GM10248 (cell line): ENCODE measurements at regions of chr3 and their contacts with region 1.

Region 1: GRCh38 chr3:99499235-99500158 is 138.9 kb upstream of the COL8A1 start:
- DNase-seq: peak; percentile 23
- CTCF ChIP-seq: peak; percentile 66

Region 2: DNA sequence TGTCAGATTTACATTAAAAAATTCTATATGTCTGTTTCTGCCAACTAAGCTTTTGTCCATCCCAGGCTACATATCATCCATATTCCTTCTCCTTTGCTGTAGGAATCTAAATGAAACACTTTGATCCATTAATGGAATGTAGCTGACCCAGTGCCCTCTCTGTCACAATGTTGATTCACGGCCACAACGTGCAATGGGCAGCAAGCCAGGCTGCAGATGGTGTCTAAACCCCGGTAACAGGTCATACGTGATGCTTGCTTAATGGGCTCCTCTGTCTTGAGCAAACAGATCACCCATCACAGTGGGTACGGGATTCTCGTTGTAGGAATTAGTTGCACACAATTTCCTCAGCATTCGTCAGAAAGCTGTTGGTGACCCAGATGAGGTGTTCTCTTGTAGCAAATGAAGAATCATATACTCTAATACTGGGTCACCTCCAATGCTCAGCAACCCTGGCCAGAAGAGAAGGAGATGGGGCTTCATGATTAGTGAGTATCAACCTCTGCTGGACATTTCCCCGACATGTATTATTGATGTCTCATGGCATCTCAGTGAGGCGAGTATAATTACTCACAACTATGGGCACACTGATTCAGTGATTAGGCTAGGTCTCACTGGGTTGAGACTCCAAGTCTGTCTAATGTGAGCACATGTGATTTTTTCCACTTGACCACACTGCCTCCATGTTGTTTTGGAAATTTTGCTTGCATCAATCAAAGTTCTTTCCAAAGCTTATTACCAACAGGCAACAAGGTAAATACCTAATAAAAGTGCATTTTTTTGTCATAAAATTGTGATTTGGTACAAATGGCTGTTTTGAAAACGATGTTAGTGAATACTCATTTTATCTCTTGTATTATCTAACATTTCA is 585.1 kb before region 1 on chr3:
- CTCF ChIA-PET with region 1: no interaction called
- POLR2A ChIA-PET with region 1: no interaction called
- DNase-seq: no peak
- CTCF ChIP-seq: no peak

Region 3: GRCh38 chr3:99468918-99469317 is 30.6 kb before region 1 on chr3:
- CTCF ChIA-PET with region 1: interaction called, 11 read pairs
- POLR2A ChIA-PET with region 1: no interaction called
- DNase-seq: no peak
- CTCF ChIP-seq: no peak

Region 4: GRCh38 chr3:99479768-99480167 is 19.7 kb before region 1 on chr3:
- CTCF ChIA-PET with region 1: interaction called, 61 read pairs
- POLR2A ChIA-PET with region 1: no interaction called
- DNase-seq: no peak
- CTCF ChIP-seq: no peak

Region 5: DNA sequence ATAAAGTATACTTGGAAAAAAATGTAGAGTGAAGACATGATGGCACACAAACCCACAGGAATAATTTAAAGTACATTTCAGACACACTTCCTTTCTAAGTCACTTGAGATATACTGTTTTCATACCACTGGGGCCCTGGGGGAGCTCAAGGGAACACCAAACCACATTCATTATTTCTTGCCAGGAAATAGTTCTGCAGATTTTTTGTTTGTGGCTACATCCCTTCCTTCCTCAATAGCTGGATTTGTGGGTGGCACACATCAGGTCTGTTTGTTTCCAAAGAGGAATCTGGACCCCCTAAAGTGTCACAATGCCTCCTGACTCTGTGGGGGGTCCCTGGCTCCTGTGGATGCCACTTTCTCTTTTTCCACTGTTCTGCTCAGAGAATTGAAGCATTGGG is 14.6 kb before region 1 on chr3:
- CTCF ChIA-PET with region 1: interaction called, 61 read pairs
- POLR2A ChIA-PET with region 1: no interaction called
- DNase-seq: no peak
- CTCF ChIP-seq: no peak

Region 6: GRCh38 chr3:99532246-99532645 is 32.7 kb after region 1 on chr3:
- CTCF ChIA-PET with region 1: interaction called, 302 read pairs
- POLR2A ChIA-PET with region 1: no interaction called
- DNase-seq: peak; percentile 17
- CTCF ChIP-seq: peak; percentile 43